Transverse colon (tissue), 4 donors: ENCODE measurements at regions of chr7 and their contacts with region 1.

Region 1: DNA sequence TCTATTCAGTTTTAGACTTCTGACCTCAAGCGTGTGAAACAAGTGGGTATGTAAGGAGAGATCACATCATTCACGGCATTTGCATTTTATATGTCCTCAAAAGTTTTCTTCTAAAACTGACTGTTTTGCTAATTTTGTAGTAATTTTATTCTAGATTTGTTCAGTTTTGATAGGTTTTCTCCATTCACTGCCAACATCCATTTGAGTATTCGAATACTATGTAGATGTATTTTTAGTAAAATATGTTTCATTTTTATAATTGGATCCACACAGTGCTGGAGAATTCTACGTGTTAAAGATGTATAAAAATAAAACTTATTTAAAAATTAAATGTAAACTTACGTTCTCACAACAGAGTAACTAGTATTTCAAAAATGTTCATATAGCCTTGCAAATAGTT is 503.0 kb downstream of the CNTNAP2 start:
- DNase-seq: no peak
- H3K4me3 ChIP-seq: no peak overlapping the region
- H3K27ac ChIP-seq: no peak overlapping the region
- H3K4me1 ChIP-seq: no peaks in the 10 kb centered on the region
- H3K27me3 ChIP-seq: no peaks in the 10 kb centered on the region
- CTCF ChIP-seq: no peak
- EP300 ChIP-seq: no peak
- POLR2A ChIP-seq: no peak

Region 2: DNA sequence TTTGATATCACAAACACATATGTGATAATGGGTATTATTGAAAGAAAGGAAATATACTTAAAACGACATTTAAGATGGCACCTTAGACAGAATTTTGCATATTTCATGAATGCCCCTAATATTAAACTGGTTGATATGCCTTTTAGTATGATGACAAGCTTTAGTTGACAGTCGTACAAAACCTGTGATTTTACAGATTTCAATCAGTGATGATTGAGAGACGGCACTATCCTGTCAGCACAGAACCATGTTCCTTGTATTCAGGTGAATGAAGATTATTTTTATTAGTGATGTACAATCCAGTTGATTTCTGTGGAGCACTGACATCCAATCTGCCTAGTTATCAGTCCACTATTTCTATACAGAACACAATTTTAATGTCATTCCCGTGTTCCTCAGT is 170.0 kb before region 1 on chr7:
- in situ Hi-C with region 1: no loop called
- intact Hi-C with region 1: no loop called
- DNase-seq: no peak
- H3K4me3 ChIP-seq: no peak overlapping the region
- H3K27ac ChIP-seq: no peak overlapping the region
- H3K4me1 ChIP-seq: no peaks in the 10 kb centered on the region
- H3K27me3 ChIP-seq: no peaks in the 10 kb centered on the region
- CTCF ChIP-seq: no peak
- EP300 ChIP-seq: no peak
- POLR2A ChIP-seq: no peak

Region 3: DNA sequence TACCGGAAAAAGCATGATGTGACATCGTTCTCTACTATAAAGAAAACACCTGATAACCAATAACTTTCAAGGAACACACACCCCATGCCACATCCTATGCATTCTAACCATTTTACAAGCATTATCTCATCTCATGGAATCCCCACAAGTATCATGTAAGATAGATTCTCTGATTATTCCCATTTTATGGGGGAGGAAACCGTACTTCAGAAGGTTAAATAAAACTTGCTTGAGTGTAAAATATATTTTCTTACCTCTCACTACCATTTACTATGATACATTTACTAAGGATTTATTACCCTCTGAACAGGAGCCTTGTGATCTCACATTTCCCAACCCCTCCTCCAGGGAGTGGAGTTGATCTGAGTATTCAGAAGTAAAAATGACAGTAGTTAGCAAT is 19.6 kb after region 1 on chr7:
- in situ Hi-C with region 1: no loop called
- intact Hi-C with region 1: loop called (anchors 2 kb)
- DNase-seq: no peak
- H3K4me3 ChIP-seq: no peak overlapping the region
- H3K27ac ChIP-seq: no peak overlapping the region
- H3K4me1 ChIP-seq: no peaks in the 10 kb centered on the region
- H3K27me3 ChIP-seq: no peaks in the 10 kb centered on the region
- CTCF ChIP-seq: no peak
- EP300 ChIP-seq: no peak
- POLR2A ChIP-seq: no peak